A549 (cell line): ENCODE measurements at regions of chr10 and their contacts with region 1.

Region 1: DNA sequence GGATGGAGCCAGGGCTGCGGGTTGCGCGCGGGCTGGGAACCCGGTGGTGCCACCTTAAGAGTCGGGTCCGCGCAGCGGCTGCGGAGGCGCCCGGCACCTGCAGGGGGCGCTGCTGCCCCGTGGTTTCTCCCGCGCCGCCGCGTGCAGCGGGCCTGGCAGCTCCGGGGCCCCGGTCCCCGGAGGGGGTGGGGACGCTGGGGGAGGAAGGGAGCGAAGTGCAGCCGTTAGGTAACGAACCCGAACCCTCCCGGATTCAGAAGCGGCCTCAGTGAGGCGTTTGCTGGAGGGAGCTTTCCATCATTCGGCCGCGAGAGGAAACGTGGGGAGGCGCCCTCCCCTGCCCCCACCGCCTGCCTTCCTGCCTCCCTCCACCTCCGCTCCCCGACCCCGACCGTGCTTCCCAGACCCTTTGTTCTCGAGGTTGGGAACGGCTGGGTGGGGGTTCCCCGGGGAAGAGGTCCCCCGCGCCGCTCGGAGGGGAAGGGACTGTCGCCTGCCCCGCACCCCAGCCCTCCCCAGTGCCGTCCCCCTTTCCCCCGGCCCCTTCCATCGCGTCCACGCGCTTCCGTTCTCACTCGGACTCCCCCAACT is 29.6 kb downstream of the SKIDA1 start:
- DNase-seq: peak; percentile 94
- ATAC-seq: peak; percentile 78 to 81
- H3K4me3 ChIP-seq: peak overlapping the region; percentile 77
- H3K27ac ChIP-seq: peak overlapping the region; percentile 93 to 99
- H3K4me1 ChIP-seq: peaks cover 37% of the 10 kb centered on the region
- CTCF ChIP-seq: peak; percentile 93
- EP300 ChIP-seq: peak in 1 of 2 experiments; percentile 48; a peak in 1 of 5 replicates
- POLR2A ChIP-seq: peak; percentile 53
- RAD21 ChIP-seq: peak; percentile 81 to 99

Region 2: GRCh38 chr10:21336476-21337170 is 159.2 kb before region 1 on chr10:
- CTCF ChIA-PET with region 1: interaction called, 17 read pairs
- POLR2A ChIA-PET with region 1: interaction called, 14 read pairs
- DNase-seq: peak; percentile 86 to 97
- ATAC-seq: peak; percentile 88 to 90
- H3K4me3 ChIP-seq: no peak overlapping the region
- H3K27ac ChIP-seq: peak overlapping the region; percentile 95 to 96
- H3K4me1 ChIP-seq: peaks cover 55% of the 10 kb centered on the region
- CTCF ChIP-seq: peak; percentile 31
- EP300 ChIP-seq: peak; percentile 58 to 73; a peak in 3 of 5 replicates
- POLR2A ChIP-seq: no peak
- RAD21 ChIP-seq: peak; percentile 63 to 75

Region 3: GRCh38 chr10:21516242-21517131 is 20.6 kb after region 1 on chr10:
- CTCF ChIA-PET with region 1: interaction called, 22 read pairs
- POLR2A ChIA-PET with region 1: interaction called, 16 read pairs
- DNase-seq: peak in 1 of 2 experiments; percentile 63
- ATAC-seq: peak; percentile 70 to 79
- H3K4me3 ChIP-seq: peak overlapping the region; percentile 71
- H3K27ac ChIP-seq: peak overlapping the region; percentile 86 to 94
- H3K4me1 ChIP-seq: peaks cover 61% of the 10 kb centered on the region
- CTCF ChIP-seq: no peak
- EP300 ChIP-seq: no peak
- POLR2A ChIP-seq: peak; percentile 27
- RAD21 ChIP-seq: no peak

Region 4: GRCh38 chr10:21707498-21707897 is 211.7 kb after region 1 on chr10:
- CTCF ChIA-PET with region 1: interaction called, 10 read pairs
- POLR2A ChIA-PET with region 1: no interaction called
- DNase-seq: no peak
- ATAC-seq: 0 out of 6 replicates have a peak, but pooled peaks of 1 of the 2 experiments have one; percentile 24
- H3K4me3 ChIP-seq: no peak overlapping the region
- H3K27ac ChIP-seq: no peak overlapping the region
- H3K4me1 ChIP-seq: peaks cover 12% of the 10 kb centered on the region
- CTCF ChIP-seq: no peak
- EP300 ChIP-seq: no peak
- POLR2A ChIP-seq: no peak
- RAD21 ChIP-seq: no peak

Region 5: DNA sequence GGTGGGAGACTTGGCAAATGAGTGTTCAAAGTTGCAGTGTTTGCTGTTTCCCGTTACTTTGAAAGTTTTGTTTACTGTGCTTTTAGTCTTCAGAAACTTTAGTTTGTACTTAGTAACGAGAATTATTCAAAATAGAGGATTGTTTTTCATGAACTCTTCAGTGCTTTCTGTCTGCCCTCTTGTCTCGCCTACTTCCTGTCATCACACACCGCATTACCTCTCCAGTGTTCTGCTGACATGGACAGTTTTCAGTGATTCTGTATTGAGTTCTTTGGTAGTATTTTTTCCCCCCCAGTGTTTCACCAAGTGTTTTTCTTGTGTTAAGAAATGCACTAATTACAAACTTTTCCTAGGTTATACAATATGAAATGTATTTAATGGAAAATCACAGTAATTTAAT is 245.1 kb after region 1 on chr10:
- CTCF ChIA-PET with region 1: interaction called, 10 read pairs
- POLR2A ChIA-PET with region 1: no interaction called
- DNase-seq: no peak
- ATAC-seq: no peak
- H3K4me3 ChIP-seq: no peak overlapping the region
- H3K27ac ChIP-seq: no peak overlapping the region
- H3K4me1 ChIP-seq: no peaks in the 10 kb centered on the region
- CTCF ChIP-seq: no peak
- EP300 ChIP-seq: no peak
- POLR2A ChIP-seq: no peak
- RAD21 ChIP-seq: no peak